Naive thymus-derived CD8-positive, alpha-beta T cell (primary cell): ENCODE measurements at regions of chr22 and their contacts with region 1.

Region 1: DNA sequence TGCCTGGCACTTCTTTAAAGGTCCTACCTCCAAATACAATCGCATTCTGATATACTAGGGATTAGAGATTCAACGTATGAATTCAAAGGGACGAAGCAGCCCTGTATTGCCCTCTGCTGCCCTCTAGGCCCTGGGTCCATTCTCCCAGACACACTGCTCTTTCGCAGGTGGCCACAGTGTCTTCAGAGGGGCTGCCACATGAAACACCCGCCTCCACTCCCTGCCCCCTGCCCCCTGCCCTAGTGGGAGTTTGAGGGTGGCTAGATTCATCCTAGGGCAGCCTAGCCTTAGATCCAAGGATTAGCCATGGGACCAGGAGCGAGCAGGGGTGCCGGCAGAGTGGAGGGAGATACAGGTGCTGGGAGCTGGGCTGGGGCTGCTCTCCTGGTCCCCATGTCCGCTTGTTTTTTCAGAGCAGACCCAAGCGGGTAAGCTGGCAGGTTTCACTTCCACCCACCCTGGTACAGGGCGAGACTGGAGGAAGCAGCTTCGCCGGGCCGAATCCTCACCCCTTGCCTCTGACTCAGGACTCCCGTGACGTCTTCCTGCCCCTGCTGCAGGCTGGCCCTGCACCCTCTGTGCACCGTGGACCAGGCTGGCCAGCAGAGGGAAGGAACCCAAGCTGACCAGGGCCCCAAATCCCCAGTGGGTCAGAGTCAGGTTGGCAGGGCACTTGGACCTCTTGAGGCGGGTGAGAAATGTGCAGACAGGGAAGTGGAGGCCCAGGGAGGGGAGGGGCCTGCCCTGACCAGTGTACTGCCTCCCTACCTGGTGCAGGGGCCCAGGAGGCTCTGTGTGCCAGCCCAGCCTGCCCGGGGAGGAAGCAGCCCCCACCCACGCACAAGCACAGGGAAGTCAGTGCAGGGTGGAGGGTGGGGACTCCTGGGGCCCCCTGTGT is 28.4 kb upstream of the HMOX1 start:
- DNase-seq: peak in 2 of 10 donors; percentile 56 to 68
- ATAC-seq: peak in 1 of 2 donors; percentile 25
- H3K4me3 Mint-ChIP-seq: peak overlapping the region in 8 of 10 donors; percentile 22 to 91 (median 60)
- H3K27ac Mint-ChIP-seq: peak overlapping the region in 4 of 10 donors; percentile 54 to 74 (median 60)
- H3K4me1 Mint-ChIP-seq: peaks cover 14 to 38% (median 28%) of the 10 kb centered on the region in 4 donors
- H3K27me3 Mint-ChIP-seq: peaks cover 3 to 30% (median 14%) of the 10 kb centered on the region in 5 donors

Region 2: DNA sequence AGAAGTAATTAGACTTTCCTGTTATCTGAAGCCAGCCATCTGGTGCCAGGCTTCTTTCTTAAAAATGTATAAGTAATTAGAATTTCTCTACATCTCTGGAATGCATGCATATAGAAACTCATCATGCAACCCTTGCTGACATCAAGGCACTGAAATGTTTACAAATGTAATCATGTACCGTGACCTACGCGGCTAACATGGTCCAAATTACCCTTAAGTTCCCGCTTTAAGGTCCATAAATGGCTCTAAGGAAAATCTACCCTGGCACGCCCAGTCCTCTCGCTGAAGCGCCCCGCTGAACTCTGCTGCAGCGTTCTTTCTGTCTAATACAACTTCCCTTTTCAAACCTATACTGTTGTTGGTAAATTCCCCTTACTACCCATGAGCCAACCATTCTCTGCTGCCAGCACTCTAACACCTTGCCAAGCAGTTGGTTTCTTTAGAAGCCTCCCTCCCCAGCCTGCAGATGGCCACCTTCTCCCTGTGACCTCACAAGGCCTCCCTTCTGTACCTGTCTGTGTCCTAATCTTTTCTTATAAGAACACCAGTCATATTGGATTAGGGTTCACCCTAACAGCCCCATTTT is 14.9 kb after region 1 on chr22:
- POLR2A ChIA-PET with region 1: interaction called, 11 read pairs
- DNase-seq: peak in 1 of 10 donors; percentile 27
- ATAC-seq: peak in 1 of 2 donors; percentile 65
- H3K4me3 Mint-ChIP-seq: no peak overlapping the region
- H3K27ac Mint-ChIP-seq: no peak overlapping the region
- H3K4me1 Mint-ChIP-seq: peaks cover 3 to 22% (median 7%) of the 10 kb centered on the region in 4 donors
- H3K27me3 Mint-ChIP-seq: peaks cover 12 to 61% (median 14%) of the 10 kb centered on the region in 5 donors